Left ventricle myocardium superior (tissue), 1 donor: ENCODE measurements at regions of chr2 and their contacts with region 1.

Region 1: DNA sequence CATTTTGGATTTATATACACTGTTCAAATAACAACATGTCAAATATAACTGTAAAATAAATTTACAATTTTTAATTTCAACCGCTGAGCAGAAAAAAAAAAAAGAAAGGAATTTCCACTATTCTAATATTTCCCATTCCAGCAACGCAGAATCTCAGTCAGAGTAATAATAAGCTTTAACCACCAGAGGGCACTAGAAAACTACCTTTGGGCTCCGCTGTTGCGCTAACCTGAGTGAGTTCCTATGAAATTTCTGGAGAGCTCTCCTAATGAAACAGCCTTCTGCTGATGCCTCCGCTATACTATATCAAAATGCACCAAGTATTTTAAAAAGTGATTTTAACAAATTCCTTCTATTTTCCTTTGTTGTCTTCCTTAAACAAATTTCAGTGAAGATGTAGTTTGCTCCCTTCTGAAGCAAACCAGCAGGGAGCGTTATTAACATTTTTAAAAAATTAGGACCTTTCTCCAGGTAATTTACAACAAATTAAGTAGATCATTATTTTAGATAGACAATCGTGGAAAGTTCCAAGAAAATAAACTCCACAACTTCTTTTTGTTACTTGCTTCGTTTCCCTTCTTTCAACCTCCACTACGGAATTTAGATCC is 23.0 kb downstream of the ERMN start:
- DNase-seq: no peak
- ATAC-seq: peak; percentile 64

Region 2: DNA sequence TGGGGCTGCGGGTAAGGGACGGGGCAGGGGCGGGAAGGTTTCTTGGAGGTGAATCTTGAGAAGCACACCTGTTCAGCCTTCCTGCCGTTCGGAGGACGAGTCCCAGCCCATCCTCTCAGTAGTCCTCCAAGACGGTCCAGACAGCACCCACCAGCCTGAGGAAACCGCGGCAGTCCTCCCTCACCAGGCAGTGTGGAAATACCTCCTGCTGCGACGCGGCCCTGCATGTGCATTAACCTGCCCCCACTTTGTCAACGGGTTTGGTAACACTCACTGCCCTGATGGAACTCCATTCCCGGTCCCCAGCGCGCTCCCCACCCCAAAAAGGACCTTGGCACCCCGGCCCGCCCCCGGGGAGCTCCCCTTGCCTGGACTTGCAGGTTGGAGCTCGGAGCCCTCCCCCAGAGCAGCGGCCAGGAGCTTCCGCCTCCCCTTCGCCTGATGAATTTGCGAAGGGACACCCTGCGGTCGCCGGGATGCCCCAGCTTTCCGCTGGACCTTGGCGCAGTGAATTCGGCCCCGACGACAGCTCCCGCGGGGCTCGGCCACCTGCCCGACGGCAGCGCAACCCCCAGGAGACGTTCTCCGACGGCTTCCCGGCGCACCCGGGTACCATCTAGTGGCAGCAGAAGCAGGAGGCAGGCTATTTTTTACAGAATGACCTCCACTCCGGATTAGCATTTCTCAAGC is 294.5 kb after region 1 on chr2:
- intact Hi-C with region 1: loop called (anchors 10 kb)
- DNase-seq: peak; percentile 52
- ATAC-seq: peak; percentile 30